ENCODE measurements at regions of chr5 and their contacts with region 1.

Region 1: DNA sequence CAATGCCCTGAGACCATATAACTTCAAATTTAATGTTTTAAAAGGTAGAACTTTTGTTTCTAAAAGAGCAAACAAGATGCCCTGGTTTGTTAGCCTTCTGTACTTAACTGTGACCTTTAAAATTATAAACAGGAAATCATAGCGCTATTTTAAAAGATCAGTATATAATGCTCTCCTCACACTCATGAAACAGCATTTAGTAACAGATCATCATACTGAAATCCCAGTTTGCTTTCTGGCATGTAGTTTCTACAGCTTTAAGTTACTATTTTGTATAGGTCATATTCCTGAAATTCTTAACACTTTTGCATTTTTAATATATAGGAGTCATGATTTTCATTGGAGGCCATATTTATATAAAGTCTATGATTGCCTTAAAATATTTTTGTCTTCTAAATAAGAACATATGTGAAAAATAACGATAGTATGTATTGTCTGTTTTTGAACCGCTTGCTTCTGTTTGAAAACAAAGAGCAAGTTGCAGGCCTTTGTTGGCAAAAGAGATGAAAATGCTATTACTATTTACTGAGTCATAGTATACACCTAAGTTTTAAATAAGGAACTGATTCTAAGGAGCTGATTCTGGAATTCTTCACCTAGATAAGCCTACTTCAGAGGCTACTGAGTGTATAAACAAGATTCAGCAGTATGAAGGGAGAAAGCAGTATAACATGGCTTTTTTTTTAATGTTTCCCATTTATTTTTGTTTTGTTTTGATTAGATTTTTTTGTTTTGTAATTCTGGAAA is 20.5 kb downstream of the SRFBP1 start:
- DNase-seq: peak; percentile 19
- ATAC-seq: peak; percentile 40
- H3K4me3 ChIP-seq: no peak overlapping the region
- H3K27ac ChIP-seq: peak overlapping the region; percentile 48; the same call in 1 of the 2 replicates
- H3K4me1 ChIP-seq: peaks cover 1% of the 10 kb centered on the region; the same call in 1 of the 2 replicates
- H3K27me3 ChIP-seq: no peaks in the 10 kb centered on the region
- CTCF ChIP-seq: no peak
- POLR2A ChIP-seq: no peak
- RAD21 ChIP-seq: no peak

Region 2: GRCh38 chr5:122019919-122020590 is 37.7 kb after region 1 on chr5:
- CTCF ChIA-PET with region 1: no interaction called
- POLR2A ChIA-PET with region 1: no interaction called
- dilution Hi-C with region 1: no loop called
- in situ Hi-C with region 1: no loop called
- intact Hi-C with region 1: loop called (anchors 5 kb)
- DNase-seq: peak; percentile 49
- ATAC-seq: no peak; the same call in 1 of the 2 replicates
- H3K4me3 ChIP-seq: no peak overlapping the region
- H3K27ac ChIP-seq: no peak overlapping the region
- H3K4me1 ChIP-seq: no peaks in the 10 kb centered on the region
- H3K27me3 ChIP-seq: no peaks in the 10 kb centered on the region
- CTCF ChIP-seq: no peak
- POLR2A ChIP-seq: no peak
- RAD21 ChIP-seq: no peak

Region 3: GRCh38 chr5:122053181-122054109 is 71.1 kb after region 1 on chr5:
- CTCF ChIA-PET with region 1: no interaction called
- POLR2A ChIA-PET with region 1: no interaction called
- dilution Hi-C with region 1: no loop called
- in situ Hi-C with region 1: no loop called
- intact Hi-C with region 1: no loop called
- DNase-seq: peak; percentile 40
- ATAC-seq: peak; percentile 42; the same call in 1 of the 2 replicates
- H3K4me3 ChIP-seq: no peak overlapping the region
- H3K27ac ChIP-seq: no peak overlapping the region
- H3K4me1 ChIP-seq: no peaks in the 10 kb centered on the region
- H3K27me3 ChIP-seq: no peaks in the 10 kb centered on the region
- CTCF ChIP-seq: no peak
- POLR2A ChIP-seq: no peak
- RAD21 ChIP-seq: no peak